Activated CD4-positive, alpha-beta T cell treated with anti-CD3 and anti-CD28 coated beads for 36 hours (primary cell): ENCODE measurements at regions of chr6 and their contacts with region 1.

Region 1: DNA sequence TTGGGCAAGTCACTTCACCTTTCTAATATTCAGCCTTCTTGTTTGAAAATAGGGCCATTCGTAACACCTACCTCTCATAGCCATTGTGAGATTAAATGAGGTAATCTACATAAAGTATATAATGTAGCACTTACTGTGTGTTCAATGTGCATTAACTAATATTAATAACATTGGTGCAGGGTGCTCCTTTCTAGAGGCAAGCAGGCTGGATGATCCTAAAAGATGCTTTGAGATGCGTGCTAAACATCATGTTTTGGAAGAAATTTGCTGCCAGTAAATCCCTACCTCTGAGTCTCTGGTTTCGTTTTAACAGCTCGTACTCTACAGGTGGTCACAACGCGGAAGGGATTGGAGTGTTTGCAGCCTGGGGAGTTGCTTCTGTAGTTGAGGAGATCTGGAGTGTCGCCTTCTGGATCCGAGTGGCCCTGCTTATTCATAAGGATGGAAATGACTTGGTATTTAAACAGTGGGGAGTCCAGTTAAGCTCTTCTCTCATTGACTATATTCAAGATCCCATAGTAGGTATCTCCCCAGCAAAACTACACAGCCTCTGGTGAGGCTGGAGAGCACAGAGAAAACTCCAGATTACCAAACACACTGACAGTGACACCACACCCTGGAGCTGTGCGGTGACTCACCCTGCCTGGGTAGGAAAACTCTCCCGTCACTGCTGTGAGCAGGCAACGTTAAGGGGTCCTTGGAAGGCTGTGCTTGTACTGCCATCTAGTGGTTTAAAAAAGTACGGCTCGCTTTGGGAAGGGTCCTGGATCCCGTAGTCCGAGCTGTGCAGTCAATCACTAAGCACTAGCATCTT is 107.9 kb downstream of the MAP3K7 start:
- DNase-seq: peak; percentile 93
- ATAC-seq: peak; percentile 93
- H3K4me3 Mint-ChIP-seq: no peak overlapping the region
- H3K27ac Mint-ChIP-seq: peak overlapping the region; percentile 85
- H3K4me1 Mint-ChIP-seq: peaks cover 61% of the 10 kb centered on the region
- H3K27me3 Mint-ChIP-seq: no peaks in the 10 kb centered on the region

Region 2: GRCh38 chr6:89829591-89830385 is 649.2 kb before region 1 on chr6 and contains the start of gene CASP8AP2:
- CTCF ChIA-PET with region 1: no interaction called
- POLR2A ChIA-PET with region 1: no interaction called
- intact Hi-C with region 1: loop called in 1 of 2 experiments (anchors 10 kb)
- DNase-seq: peak; percentile 98
- ATAC-seq: peak; percentile 96
- H3K4me3 Mint-ChIP-seq: peak within 1 kb of the TSS; percentile 97
- H3K27ac Mint-ChIP-seq: peak within 1 kb of the TSS; percentile 92
- H3K4me1 Mint-ChIP-seq: peaks cover 33% of the 10 kb centered on the region
- H3K27me3 Mint-ChIP-seq: no peaks in the 10 kb centered on the region
- total RNA-seq, gene CASP8AP2: 34.0 to 36.5 TPM

Region 3: GRCh38 chr6:90194371-90194841 is 284.6 kb before region 1 on chr6:
- CTCF ChIA-PET with region 1: no interaction called
- POLR2A ChIA-PET with region 1: no interaction called
- intact Hi-C with region 1: loop called in 1 of 2 experiments (anchors 5 kb)
- DNase-seq: peak; percentile 53
- ATAC-seq: peak; percentile 42
- H3K4me3 Mint-ChIP-seq: peak overlapping the region; percentile 5
- H3K27ac Mint-ChIP-seq: peak overlapping the region; percentile 88
- H3K4me1 Mint-ChIP-seq: peaks cover 93% of the 10 kb centered on the region
- H3K27me3 Mint-ChIP-seq: no peaks in the 10 kb centered on the region

Region 4: GRCh38 chr6:90319044-90319443 is 160.0 kb before region 1 on chr6:
- CTCF ChIA-PET with region 1: interaction called, 7 read pairs
- POLR2A ChIA-PET with region 1: no interaction called
- intact Hi-C with region 1: loop called in 1 of 2 experiments (anchors 1 kb)
- DNase-seq: peak; percentile 40
- ATAC-seq: peak; percentile 82
- H3K4me3 Mint-ChIP-seq: no peak overlapping the region
- H3K27ac Mint-ChIP-seq: peak overlapping the region; percentile 80
- H3K4me1 Mint-ChIP-seq: peaks cover 43% of the 10 kb centered on the region
- H3K27me3 Mint-ChIP-seq: peaks cover 6% of the 10 kb centered on the region

Region 5: GRCh38 chr6:90458353-90459224 is 20.4 kb before region 1 on chr6:
- CTCF ChIA-PET with region 1: interaction called, 112 read pairs
- POLR2A ChIA-PET with region 1: interaction called, 11 read pairs
- intact Hi-C with region 1: no loop called
- DNase-seq: peak; percentile 93
- ATAC-seq: peak; percentile 89
- H3K4me3 Mint-ChIP-seq: peak overlapping the region; percentile 63
- H3K27ac Mint-ChIP-seq: peak overlapping the region; percentile 99
- H3K4me1 Mint-ChIP-seq: peaks cover 92% of the 10 kb centered on the region
- H3K27me3 Mint-ChIP-seq: no peaks in the 10 kb centered on the region